B cell (primary cell): ENCODE measurements at regions of chr9 and their contacts with region 1.

Region 1: DNA sequence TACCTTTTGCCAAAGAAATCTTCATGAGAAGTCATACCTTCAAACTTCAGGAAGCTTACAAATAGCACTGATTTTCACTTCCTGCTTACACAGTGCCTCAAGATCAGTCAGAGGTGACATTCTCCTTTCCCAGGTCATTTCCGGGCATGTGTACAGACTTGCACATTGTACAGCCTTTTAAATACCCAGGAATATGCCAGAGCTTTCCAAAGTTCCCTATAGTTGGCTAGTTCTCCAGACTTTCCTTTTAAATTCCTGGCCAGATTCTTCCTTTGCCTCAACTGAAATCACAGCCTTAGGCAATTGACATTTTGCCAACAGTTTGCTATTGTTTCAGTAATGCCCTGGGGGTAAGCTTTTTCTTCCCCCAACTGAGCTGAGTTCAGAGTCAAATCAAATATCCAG is 47.2 kb downstream of the RFX3 start:
- DNase-seq: peak; percentile 69
- ATAC-seq: peak; percentile 60
- H3K4me3 ChIP-seq: peak overlapping the region in 1 of 5 experiments; percentile 39
- H3K4me3 Mint-ChIP-seq: peak overlapping the region; percentile 62
- H3K27ac ChIP-seq: peak overlapping the region; percentile 61 to 63
- H3K27ac Mint-ChIP-seq: peak overlapping the region; percentile 86
- H3K4me1 ChIP-seq: peaks cover 52 to 57% of the 10 kb centered on the region in 2 donors
- H3K4me1 Mint-ChIP-seq: peaks cover 60% of the 10 kb centered on the region
- H3K27me3 ChIP-seq: no peaks in the 10 kb centered on the region
- H3K27me3 Mint-ChIP-seq: no peaks in the 10 kb centered on the region
- CTCF ChIP-seq: no peak

Region 2: DNA sequence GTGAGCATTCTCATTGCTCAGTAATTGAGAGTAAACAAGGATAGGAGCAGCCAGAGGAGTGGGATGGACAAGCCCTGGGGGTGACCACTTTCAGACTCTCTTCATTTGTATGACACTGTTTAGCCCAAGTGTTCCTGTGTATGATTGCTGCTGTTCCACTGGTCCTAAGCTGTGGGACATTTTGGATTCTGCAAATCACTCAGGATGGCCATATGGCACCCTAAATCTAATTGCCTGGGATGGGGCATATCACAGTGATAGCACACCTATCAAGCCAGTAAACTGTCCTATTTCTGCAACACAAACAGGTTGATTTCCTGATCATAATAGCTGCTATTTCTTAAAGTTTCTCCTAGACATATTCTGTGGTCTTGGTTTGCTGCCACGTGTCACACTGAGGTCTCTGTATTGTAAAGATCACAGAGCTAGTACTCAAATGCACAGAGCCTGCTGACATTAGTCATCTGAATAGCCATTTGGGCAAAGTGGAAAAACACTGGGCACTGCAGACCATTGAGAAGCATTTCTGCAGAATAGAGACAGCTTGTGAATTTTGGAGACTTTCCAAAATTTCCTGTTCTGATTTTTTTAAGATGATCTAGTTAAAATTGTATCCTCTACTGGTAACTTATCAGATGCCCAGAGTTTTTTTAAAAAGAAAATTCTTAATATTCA is 273.0 kb before region 1 on chr9:
- CTCF ChIA-PET with region 1: no interaction called
- POLR2A ChIA-PET with region 1: no interaction called
- intact Hi-C with region 1: no loop called
- DNase-seq: no peak
- ATAC-seq: no peak
- H3K4me3 ChIP-seq: no peak overlapping the region
- H3K4me3 Mint-ChIP-seq: no peak overlapping the region
- H3K27ac ChIP-seq: no peak overlapping the region
- H3K27ac Mint-ChIP-seq: no peak overlapping the region
- H3K4me1 ChIP-seq: no peaks in the 10 kb centered on the region
- H3K4me1 Mint-ChIP-seq: no peaks in the 10 kb centered on the region
- H3K27me3 ChIP-seq: no peaks in the 10 kb centered on the region
- H3K27me3 Mint-ChIP-seq: peaks cover under 1% of the 10 kb centered on the region
- CTCF ChIP-seq: no peak

Region 3: GRCh38 chr9:3361116-3361515 is 117.4 kb before region 1 on chr9:
- CTCF ChIA-PET with region 1: no interaction called
- POLR2A ChIA-PET with region 1: no interaction called
- intact Hi-C with region 1: no loop called
- DNase-seq: no peak
- ATAC-seq: no peak
- H3K4me3 ChIP-seq: no peak overlapping the region
- H3K4me3 Mint-ChIP-seq: no peak overlapping the region
- H3K27ac ChIP-seq: no peak overlapping the region
- H3K27ac Mint-ChIP-seq: no peak overlapping the region
- H3K4me1 ChIP-seq: peaks cover 3 to 5% of the 10 kb centered on the region in 2 donors
- H3K4me1 Mint-ChIP-seq: peaks cover 14% of the 10 kb centered on the region
- H3K27me3 ChIP-seq: no peaks in the 10 kb centered on the region
- H3K27me3 Mint-ChIP-seq: no peaks in the 10 kb centered on the region
- CTCF ChIP-seq: no peak

Region 4: GRCh38 chr9:3455717-3456116 is 22.8 kb before region 1 on chr9:
- CTCF ChIA-PET with region 1: no interaction called
- POLR2A ChIA-PET with region 1: no interaction called
- intact Hi-C with region 1: no loop called
- DNase-seq: no peak
- ATAC-seq: no peak
- H3K4me3 ChIP-seq: no peak overlapping the region
- H3K4me3 Mint-ChIP-seq: no peak overlapping the region
- H3K27ac ChIP-seq: no peak overlapping the region
- H3K27ac Mint-ChIP-seq: no peak overlapping the region
- H3K4me1 ChIP-seq: no peaks in the 10 kb centered on the region
- H3K4me1 Mint-ChIP-seq: peaks cover 3% of the 10 kb centered on the region
- H3K27me3 ChIP-seq: no peaks in the 10 kb centered on the region
- H3K27me3 Mint-ChIP-seq: no peaks in the 10 kb centered on the region
- CTCF ChIP-seq: no peak

Region 5: GRCh38 chr9:3495855-3496254 is 17.3 kb after region 1 on chr9:
- CTCF ChIA-PET with region 1: no interaction called
- POLR2A ChIA-PET with region 1: no interaction called
- intact Hi-C with region 1: loop called (anchors 2 kb)
- DNase-seq: no peak
- ATAC-seq: no peak
- H3K4me3 ChIP-seq: no peak overlapping the region
- H3K4me3 Mint-ChIP-seq: no peak overlapping the region
- H3K27ac ChIP-seq: no peak overlapping the region
- H3K27ac Mint-ChIP-seq: no peak overlapping the region
- H3K4me1 ChIP-seq: no peaks in the 10 kb centered on the region
- H3K4me1 Mint-ChIP-seq: peaks cover 24% of the 10 kb centered on the region
- H3K27me3 ChIP-seq: no peaks in the 10 kb centered on the region
- H3K27me3 Mint-ChIP-seq: no peaks in the 10 kb centered on the region
- CTCF ChIP-seq: no peak

Region 6: DNA sequence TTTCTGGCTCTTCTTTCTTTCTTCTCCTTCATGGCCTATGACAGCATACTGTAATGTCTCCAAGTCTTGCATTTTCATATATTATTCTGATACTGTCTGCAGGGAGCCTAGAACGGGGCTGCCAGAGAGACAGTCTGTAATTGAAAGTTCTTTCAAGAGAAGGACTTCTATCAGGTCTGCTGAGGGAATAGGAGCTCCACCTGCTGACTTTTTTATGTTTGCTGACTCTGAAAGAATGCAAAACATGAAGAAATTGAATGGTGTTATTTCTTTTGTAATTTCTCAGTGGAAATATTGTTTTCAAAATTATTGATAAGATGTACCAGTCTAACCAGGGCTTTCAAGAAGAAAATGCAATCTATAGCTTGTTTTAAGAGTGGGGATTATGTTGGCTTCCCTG is 169.1 kb after region 1 on chr9:
- CTCF ChIA-PET with region 1: no interaction called
- POLR2A ChIA-PET with region 1: no interaction called
- intact Hi-C with region 1: no loop called
- DNase-seq: no peak
- ATAC-seq: no peak
- H3K4me3 ChIP-seq: no peak overlapping the region
- H3K4me3 Mint-ChIP-seq: no peak overlapping the region
- H3K27ac ChIP-seq: no peak overlapping the region
- H3K27ac Mint-ChIP-seq: no peak overlapping the region
- H3K4me1 ChIP-seq: no peaks in the 10 kb centered on the region
- H3K4me1 Mint-ChIP-seq: no peaks in the 10 kb centered on the region
- H3K27me3 ChIP-seq: no peaks in the 10 kb centered on the region
- H3K27me3 Mint-ChIP-seq: no peaks in the 10 kb centered on the region
- CTCF ChIP-seq: no peak